Psoas muscle (tissue), 8 donors: ENCODE measurements at regions of chr14 and their contacts with region 1.

Region 1: GRCh38 chr14:76918751-76919543 is 92.7 kb downstream of the LRRC74A start:
- DNase-seq: peak; percentile 97 to 99
- ATAC-seq: peak; percentile 85 to 92 (median 88)
- H3K4me3 ChIP-seq: peak overlapping the region; percentile 50
- H3K27ac ChIP-seq: peak overlapping the region; percentile 91
- H3K4me1 ChIP-seq: peaks cover 55% of the 10 kb centered on the region
- H3K27me3 ChIP-seq: no peaks in the 10 kb centered on the region
- CTCF ChIP-seq: no peak

Region 2: GRCh38 chr14:76956316-76957090 is 37.6 kb after region 1 on chr14:
- intact Hi-C with region 1: loop called (anchors 2 to 5 kb)
- DNase-seq: peak; percentile 90 to 92
- ATAC-seq: peak; percentile 74 to 78 (median 76)
- H3K4me3 ChIP-seq: peak overlapping the region; percentile 62
- H3K27ac ChIP-seq: peak overlapping the region; percentile 99
- H3K4me1 ChIP-seq: peaks cover 53% of the 10 kb centered on the region
- H3K27me3 ChIP-seq: no peaks in the 10 kb centered on the region
- CTCF ChIP-seq: no peak

Region 3: GRCh38 chr14:77040059-77040740 is 121.3 kb after region 1 on chr14:
- intact Hi-C with region 1: loop called in 1 of 2 experiments (anchors 5 kb)
- DNase-seq: peak; percentile 99
- ATAC-seq: peak; percentile 63 to 71 (median 66)
- H3K4me3 ChIP-seq: peak overlapping the region; percentile 62
- H3K27ac ChIP-seq: peak overlapping the region; percentile 95
- H3K4me1 ChIP-seq: peaks cover 62% of the 10 kb centered on the region
- H3K27me3 ChIP-seq: no peaks in the 10 kb centered on the region
- CTCF ChIP-seq: no peak